Heart right ventricle (tissue), 16 donors: ENCODE measurements at regions of chr19 and their contacts with region 1.

Region 1: GRCh38 chr19:58386576-58387337 is at the start of gene RPS5:
- DNase-seq: peak; percentile 94 to 97
- ATAC-seq: peak; percentile 93 to 98 (median 97)
- H3K4me3 ChIP-seq: peak within 1 kb of the TSS; percentile 63 to 92 (median 86)
- H3K27ac ChIP-seq: peak within 1 kb of the TSS; percentile 90 to 100 (median 98)
- H3K4me1 ChIP-seq: peaks cover 14 to 54% (median 35%) of the 10 kb centered on the region in 9 donors
- H3K27me3 ChIP-seq: no peaks in the 10 kb centered on the region
- CTCF ChIP-seq: no peak
- total RNA-seq, gene RPS5: 360 to 610 (median 413) TPM

Region 2: DNA sequence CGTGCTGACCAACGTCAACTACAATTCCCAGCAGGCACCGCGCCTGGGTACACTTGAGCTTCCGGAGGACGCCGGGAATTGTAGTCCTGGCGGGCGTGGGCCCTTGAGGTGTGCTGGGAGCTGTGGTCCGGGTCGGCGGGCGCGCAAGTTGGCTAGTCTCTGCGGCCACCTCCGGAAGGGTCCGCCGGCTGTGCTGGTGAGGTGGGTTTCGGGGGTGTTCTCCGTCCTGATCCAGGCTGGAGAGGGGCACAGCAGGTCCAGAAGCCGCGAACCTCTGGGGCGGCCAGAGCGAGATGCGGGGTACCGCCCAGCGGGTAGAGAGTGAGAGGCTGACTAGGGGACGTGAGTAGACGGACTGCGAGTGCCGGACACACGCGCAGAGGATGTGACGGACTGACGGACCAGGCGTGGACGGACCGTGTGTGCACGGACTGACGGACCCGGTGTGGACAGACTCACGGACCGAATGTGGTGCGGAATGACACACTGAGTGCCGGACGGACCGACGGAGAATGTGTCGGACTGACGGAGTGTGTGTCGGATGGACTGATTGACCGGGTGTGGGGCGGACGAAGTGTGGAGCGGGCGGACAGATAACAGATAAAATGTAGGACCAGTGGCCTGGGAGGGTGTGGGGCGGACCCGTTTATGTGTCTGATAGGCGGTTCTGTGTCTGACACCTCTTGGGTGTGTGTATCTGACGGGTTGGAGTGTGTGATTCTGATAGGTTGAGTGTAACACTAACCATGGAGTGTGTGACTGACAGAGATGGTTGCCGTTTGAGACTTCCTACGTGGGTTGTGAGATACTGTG is 59.6 kb before region 1 on chr19 and contains the start of gene ZSCAN22:
- intact Hi-C with region 1: loop called in 1 of 10 experiments (anchors 2 kb)
- DNase-seq: peak; percentile 96 to 98
- ATAC-seq: peak; percentile 98 to 99 (median 98)
- H3K4me3 ChIP-seq: peak within 1 kb of the TSS; percentile 52 to 79 (median 71)
- H3K27ac ChIP-seq: peak within 1 kb of the TSS; percentile 81 to 96 (median 92)
- H3K4me1 ChIP-seq: peaks cover 10 to 33% (median 26%) of the 10 kb centered on the region in 9 donors
- H3K27me3 ChIP-seq: no peaks in the 10 kb centered on the region
- CTCF ChIP-seq: no peak
- total RNA-seq, gene ZSCAN22: 1.2 to 2.1 (median 1.4) TPM

Region 3: DNA sequence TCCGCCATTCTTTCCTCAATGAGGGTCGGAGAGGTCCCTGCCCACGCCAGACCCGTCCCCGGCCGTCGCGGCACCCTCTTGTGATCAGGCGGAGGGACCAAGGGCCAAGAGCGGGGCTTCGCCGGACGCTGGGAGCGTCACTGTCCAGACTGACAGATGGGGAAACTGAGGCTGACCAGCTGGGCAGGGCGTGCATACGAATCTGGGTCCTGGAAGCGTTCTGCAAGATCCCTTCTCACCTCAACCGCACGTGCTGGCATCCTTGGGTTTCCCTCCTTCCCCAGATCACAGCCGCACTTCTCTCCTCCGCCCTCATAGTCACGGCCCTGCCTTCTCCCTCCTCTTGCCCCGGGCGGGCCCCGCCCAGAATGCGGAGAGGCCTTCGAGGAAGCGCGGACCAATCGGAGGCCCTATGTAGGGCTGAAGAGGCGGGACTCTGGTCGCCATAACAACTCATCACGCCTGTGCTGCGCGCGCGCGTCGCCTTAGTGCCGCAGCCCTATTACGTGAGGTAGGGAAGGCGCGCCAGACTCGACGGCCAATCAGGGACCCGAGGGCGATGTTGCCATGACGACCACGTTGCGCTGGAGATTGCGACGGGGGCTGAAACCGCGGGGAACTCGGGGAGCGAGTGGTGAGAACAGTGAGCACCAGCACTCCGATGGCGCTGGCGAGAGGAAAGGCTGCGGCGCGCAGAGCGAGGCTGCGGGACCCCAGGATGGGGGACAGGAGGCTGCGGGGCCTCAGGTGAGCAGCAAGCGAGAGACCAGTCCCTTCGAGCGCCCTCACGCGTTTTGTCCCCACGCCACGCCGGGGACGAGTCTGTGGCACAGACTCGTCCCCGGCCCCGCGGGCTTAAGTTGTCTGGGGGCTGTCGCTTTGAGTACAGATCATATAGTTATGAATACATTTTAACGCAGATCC is 14.4 kb after region 1 on chr19:
- intact Hi-C with region 1: loop called in 1 of 10 experiments (anchors 2 kb)
- DNase-seq: peak; percentile 99 to 100
- ATAC-seq: peak; percentile 98 to 100 (median 100)
- H3K4me3 ChIP-seq: peak overlapping the region; percentile 4 to 74 (median 62)
- H3K27ac ChIP-seq: peak overlapping the region in 7 of 10 donors; percentile 37 to 72 (median 52)
- H3K4me1 ChIP-seq: peaks cover 7 to 22% (median 13%) of the 10 kb centered on the region in 9 donors
- H3K27me3 ChIP-seq: peaks cover 0 to 19% (median 15%) of the 10 kb centered on the region in 7 donors
- CTCF ChIP-seq: peak in 3 of 9 donors; percentile 28 to 41 (median 30)